GM18951 (cell line): ENCODE measurements at regions of chr11 and their contacts with region 1.

Region 1: GRCh38 chr11:3341298-3341697 is 37.6 kb downstream of the ZNF195 start:
- POLR2A ChIP-seq: no peak

Region 2: DNA sequence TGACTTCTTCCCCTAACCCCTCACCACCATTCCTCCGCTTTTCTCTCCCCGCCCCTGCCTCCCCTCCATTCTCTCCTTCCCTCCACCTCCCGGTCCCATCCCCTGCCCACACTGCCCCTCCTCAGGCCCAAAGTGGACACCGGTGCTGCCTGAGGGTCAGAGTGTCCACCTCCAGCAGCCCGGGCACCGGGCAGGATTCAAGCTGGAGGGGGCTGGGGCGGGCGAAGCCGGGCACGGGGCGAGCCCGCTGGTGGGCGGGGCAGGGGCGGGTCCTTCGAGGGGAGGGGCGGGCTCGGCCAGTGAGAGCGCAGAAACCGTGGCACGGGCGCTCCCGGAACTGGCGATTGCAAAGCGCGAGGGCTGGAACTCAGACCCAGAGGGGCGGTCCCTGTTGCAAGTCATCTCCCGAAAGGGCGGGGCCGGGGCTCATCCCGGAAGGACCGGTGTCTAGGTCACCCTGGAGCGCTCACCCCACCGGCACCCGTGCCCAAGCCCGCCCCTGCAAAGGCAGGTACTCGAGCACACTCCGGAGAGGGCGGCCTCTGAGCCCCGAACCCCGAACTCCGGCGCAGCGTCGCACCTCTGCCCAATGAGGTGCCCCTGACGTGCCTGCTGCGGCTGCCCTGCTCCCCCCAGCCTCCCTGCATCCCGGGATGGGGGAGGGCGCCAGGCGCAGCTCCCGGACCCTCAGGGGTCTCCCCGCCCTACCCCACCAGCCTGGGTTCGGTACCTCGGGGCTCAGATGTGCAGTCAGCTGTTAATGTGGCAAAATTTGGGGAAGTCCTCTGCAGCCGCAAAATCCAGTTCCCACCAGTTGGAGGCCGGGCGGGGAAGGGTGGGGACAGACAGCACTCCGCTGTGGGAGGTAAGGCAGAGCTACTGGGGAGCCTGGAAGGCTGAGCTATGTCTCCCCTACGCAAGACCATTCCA is 439.2 kb before region 1 on chr11:
- in situ Hi-C with region 1: no loop called
- POLR2A ChIP-seq: peak; percentile 73

Region 3: DNA sequence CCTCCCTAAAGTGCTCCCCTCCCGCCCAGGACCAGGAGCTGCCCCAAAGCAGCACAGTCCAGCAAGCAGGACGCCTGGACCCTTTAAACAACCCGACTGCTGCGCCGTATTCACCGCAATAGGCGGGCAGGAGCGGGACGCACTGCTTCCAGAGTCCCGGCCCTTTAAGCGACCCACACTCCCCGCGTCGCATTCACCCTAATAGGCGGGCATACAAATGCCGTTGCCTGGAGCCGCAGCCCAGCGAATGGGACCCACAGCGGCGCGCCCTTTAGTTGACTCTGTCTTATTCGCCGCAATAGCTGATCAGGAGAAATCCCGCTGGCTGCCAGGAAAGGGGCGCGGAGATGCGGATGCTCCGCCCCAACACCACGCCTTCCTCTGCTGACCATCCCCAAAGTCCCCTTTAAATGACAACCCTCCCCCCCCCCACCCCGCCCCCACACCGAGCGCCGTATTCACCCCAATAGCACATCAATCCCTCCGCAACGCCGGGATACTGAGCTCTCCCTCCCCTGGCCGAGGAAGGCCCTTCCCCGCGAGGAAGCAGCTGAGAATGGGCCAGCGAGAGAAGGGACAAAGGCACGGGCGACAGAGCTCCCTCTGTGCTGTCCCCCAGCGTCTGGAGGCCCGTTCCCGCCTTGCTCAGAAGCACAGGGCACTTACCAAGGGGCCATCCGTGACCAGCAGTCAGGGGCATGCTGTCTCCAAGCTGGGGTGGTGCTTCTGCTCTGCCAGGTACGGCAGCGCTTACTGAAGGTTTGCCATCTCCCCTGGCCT is 180.9 kb before region 1 on chr11:
- in situ Hi-C with region 1: no loop called
- POLR2A ChIP-seq: no peak

Region 4: GRCh38 chr11:3412837-3413236 is 71.5 kb after region 1 on chr11:
- in situ Hi-C with region 1: loop called (anchors 10 kb)
- POLR2A ChIP-seq: no peak

Region 5: GRCh38 chr11:3434976-3435375 is 93.7 kb after region 1 on chr11:
- in situ Hi-C with region 1: no loop called
- POLR2A ChIP-seq: no peak